OCI-LY7 (cell line): ENCODE measurements at regions of chr4 and their contacts with region 1.

Region 1: DNA sequence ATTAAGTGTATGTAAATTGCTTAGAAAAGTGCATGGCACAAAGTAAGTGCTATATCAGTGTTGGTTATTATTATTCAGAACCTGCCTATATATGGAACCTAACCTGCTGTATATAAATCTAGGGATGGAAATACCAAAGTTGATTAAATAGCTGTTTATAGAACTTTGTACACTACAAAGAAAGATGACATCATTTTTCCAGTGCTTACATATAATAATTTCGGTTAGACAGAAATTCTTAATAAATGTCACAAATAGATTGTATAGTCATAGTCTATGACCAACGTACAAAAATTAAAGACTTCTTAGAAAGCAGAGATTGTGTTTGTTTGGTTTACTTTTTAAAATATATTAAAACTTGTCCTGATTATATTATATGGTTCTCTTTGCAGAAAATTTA is 4.4 kb downstream of the GYPB start:
- DNase-seq: no peak
- H3K4me3 ChIP-seq: no peak overlapping the region
- H3K27ac ChIP-seq: no peak overlapping the region
- H3K4me1 ChIP-seq: no peaks in the 10 kb centered on the region
- CTCF ChIP-seq: no peak

Region 2: GRCh38 chr4:143773998-143774895 is 240.6 kb before region 1 on chr4:
- CTCF ChIA-PET with region 1: no interaction called
- POLR2A ChIA-PET with region 1: no interaction called
- intact Hi-C with region 1: loop called (anchors 2 kb)
- DNase-seq: peak; percentile 68
- H3K4me3 ChIP-seq: no peak overlapping the region
- H3K27ac ChIP-seq: no peak overlapping the region
- H3K4me1 ChIP-seq: no peaks in the 10 kb centered on the region
- CTCF ChIP-seq: peak; percentile 88

Region 3: GRCh38 chr4:143986180-143986579 is 28.6 kb before region 1 on chr4:
- CTCF ChIA-PET with region 1: no interaction called
- POLR2A ChIA-PET with region 1: no interaction called
- intact Hi-C with region 1: no loop called
- DNase-seq: no peak
- H3K4me3 ChIP-seq: no peak overlapping the region
- H3K27ac ChIP-seq: no peak overlapping the region
- H3K4me1 ChIP-seq: no peaks in the 10 kb centered on the region
- CTCF ChIP-seq: no peak

Region 4: GRCh38 chr4:144090744-144091143 is 75.9 kb after region 1 on chr4:
- CTCF ChIA-PET with region 1: no interaction called
- POLR2A ChIA-PET with region 1: no interaction called
- intact Hi-C with region 1: no loop called
- DNase-seq: no peak
- H3K4me3 ChIP-seq: no peak overlapping the region
- H3K27ac ChIP-seq: no peak overlapping the region
- H3K4me1 ChIP-seq: no peaks in the 10 kb centered on the region
- CTCF ChIP-seq: no peak

Region 5: DNA sequence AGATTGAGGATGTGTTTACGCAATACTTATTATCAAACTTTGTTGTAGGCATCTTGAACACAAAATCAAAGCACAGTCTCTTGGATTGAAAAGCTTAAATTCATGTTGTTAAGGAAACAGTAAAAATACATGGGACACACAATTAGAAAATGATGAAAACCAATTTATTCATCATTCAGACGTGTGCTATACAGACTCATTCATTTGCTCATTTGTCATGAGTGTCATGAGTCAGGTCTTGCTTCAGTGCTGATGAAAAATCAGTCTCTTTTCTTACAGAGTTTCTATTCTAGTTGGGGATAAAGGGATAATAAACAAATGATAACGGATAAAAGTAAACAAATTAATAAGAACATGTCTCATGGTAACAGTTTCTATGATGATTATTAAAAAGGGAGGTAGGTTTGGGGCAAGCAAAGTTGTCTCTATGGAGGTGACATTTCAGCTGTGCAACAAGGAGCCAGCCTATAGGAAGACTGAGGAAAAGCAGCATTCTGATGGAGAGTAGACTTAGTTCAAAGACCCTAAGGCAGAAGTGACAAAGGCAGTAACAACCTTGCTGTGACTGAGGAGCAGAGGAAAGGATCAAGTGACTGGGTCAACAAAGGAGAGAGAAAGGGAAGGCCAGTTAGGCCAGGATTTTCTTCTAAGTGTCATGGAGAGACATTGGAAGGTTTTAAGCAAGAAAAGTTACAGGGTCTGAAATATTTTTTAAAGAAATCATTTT is 407.2 kb after region 1 on chr4:
- CTCF ChIA-PET with region 1: no interaction called
- POLR2A ChIA-PET with region 1: no interaction called
- intact Hi-C with region 1: no loop called
- DNase-seq: no peak
- H3K4me3 ChIP-seq: no peak overlapping the region
- H3K27ac ChIP-seq: no peak overlapping the region
- H3K4me1 ChIP-seq: no peaks in the 10 kb centered on the region
- CTCF ChIP-seq: no peak

Region 6: GRCh38 chr4:145097821-145098674 is 1083.2 kb after region 1 on chr4 and contains the starts of genes ABCE1 and ANAPC10:
- CTCF ChIA-PET with region 1: no interaction called
- POLR2A ChIA-PET with region 1: no interaction called
- intact Hi-C with region 1: no loop called
- DNase-seq: peak; percentile 99
- H3K4me3 ChIP-seq: peak within 1 kb of the TSS; percentile 79
- H3K27ac ChIP-seq: peak within 1 kb of the TSS; percentile 80
- H3K4me1 ChIP-seq: peaks cover 52% of the 10 kb centered on the region
- CTCF ChIP-seq: peak; percentile 50
- total RNA-seq, gene ABCE1: 108 and 119 TPM in 2 replicates
- total RNA-seq, gene ANAPC10: 34.1 and 46.1 TPM in 2 replicates